HepG2 (cell line): ENCODE measurements at regions of chr11 and their contacts with region 1.

Region 1: GRCh38 chr11:67303132-67303834 is at the start of gene SSH3:
- DNase-seq: peak; percentile 56
- ATAC-seq: peak; percentile 86
- H3K4me3 ChIP-seq: peak within 1 kb of the TSS; percentile 89 to 98 (median 90)
- H3K27ac ChIP-seq: peak within 1 kb of the TSS; percentile 61
- H3K4me1 ChIP-seq: peaks cover 20% of the 10 kb centered on the region
- H3K27me3 ChIP-seq: no peaks in the 10 kb centered on the region
- CTCF ChIP-seq: 0 out of 2 replicates have a peak, but pooled peaks have one; percentile 5
- EP300 ChIP-seq: no peak
- POLR2A ChIP-seq: peak in 1 of 2 experiments; percentile 69; a peak in 2 of 4 replicates
- RAD21 ChIP-seq: no peak; the same call in 1 of the 2 replicates
- total RNA-seq, gene SSH3: 7.5 and 12.4 TPM in 2 replicates

Region 2: GRCh38 chr11:67288452-67289225 is 14.6 kb before region 1 on chr11:
- CTCF ChIA-PET with region 1: interaction called, 3 read pairs
- POLR2A ChIA-PET with region 1: interaction called, 66 read pairs
- in situ Hi-C with region 1: no loop called
- intact Hi-C with region 1: no loop called
- DNase-seq: peak; percentile 85
- ATAC-seq: peak; percentile 80
- H3K4me3 ChIP-seq: peak overlapping the region; percentile 69 to 94 (median 91)
- H3K27ac ChIP-seq: peak overlapping the region; percentile 100
- H3K4me1 ChIP-seq: peaks cover 37% of the 10 kb centered on the region
- H3K27me3 ChIP-seq: no peaks in the 10 kb centered on the region
- CTCF ChIP-seq: peak; percentile 74
- EP300 ChIP-seq: peak in 1 of 2 experiments; percentile 67; a peak in 2 of 4 replicates
- POLR2A ChIP-seq: peak in 1 of 2 experiments; percentile 88; a peak in 2 of 4 replicates
- RAD21 ChIP-seq: peak; percentile 88

Region 3: GRCh38 chr11:67323526-67323925 is 20.2 kb after region 1 on chr11:
- CTCF ChIA-PET with region 1: no interaction called
- POLR2A ChIA-PET with region 1: no interaction called
- in situ Hi-C with region 1: no loop called
- intact Hi-C with region 1: no loop called
- DNase-seq: no peak
- ATAC-seq: no peak
- H3K4me3 ChIP-seq: no peak overlapping the region
- H3K27ac ChIP-seq: no peak overlapping the region
- H3K4me1 ChIP-seq: peaks cover 7% of the 10 kb centered on the region
- H3K27me3 ChIP-seq: no peaks in the 10 kb centered on the region
- CTCF ChIP-seq: no peak
- EP300 ChIP-seq: no peak
- POLR2A ChIP-seq: no peak
- RAD21 ChIP-seq: no peak